SK-N-SH (cell line): ENCODE measurements at regions of chr4 and their contacts with region 1.

Region 1: GRCh38 chr4:186021461-186022167 is 47.3 kb upstream of the TLR3 start:
- DNase-seq: peak; percentile 82
- H3K4me3 ChIP-seq: peak overlapping the region; percentile 9 to 42; a peak in 2 of 4 replicates
- H3K27ac ChIP-seq: peak overlapping the region in 1 of 2 experiments; percentile 80; a peak in 2 of 4 replicates
- H3K4me1 ChIP-seq: peaks cover 0 to 17% of the 10 kb centered on the region in 2 experiments; a peak in 2 of 4 replicates
- H3K27me3 ChIP-seq: no peaks in the 10 kb centered on the region
- CTCF ChIP-seq: peak; percentile 92
- EP300 ChIP-seq: peak in 1 of 2 experiments; percentile 7; a peak in 1 of 4 replicates
- RAD21 ChIP-seq: peak; percentile 98

Region 2: DNA sequence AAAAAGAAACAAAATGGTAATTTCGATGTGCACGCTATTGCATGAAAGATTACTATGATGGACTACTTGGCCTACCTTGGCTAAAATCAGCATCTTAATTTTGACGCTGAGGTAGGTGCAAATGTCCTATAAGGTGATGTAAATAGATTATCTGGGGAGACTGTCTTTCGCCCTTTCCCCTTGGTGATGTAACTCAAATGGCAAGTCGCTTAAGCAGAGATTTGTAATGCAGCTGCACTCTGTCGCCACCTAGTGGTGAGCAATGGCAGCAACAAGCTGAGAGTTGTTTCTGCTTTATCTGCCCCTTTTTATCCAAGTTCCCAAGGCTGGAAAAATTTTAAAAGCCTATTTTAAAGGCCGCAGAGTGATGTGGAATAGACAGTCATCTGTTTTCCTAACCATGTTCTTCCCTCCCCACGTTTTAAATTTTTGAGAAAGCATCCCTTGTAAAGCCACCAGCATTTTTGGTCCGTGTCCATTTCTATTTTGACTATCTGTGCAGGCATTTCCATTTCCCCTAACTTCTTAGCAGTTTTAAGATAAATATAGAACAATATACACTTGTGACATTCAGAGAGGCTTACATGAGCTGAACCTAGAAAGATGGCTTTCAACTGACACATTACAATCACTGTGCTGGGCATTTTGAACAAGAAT is 424.0 kb before region 1 on chr4:
- CTCF ChIA-PET with region 1: interaction called, 29 read pairs
- POLR2A ChIA-PET with region 1: no interaction called
- DNase-seq: peak; percentile 73
- H3K4me3 ChIP-seq: peak overlapping the region in 1 of 2 experiments; percentile 43; a peak in 1 of 4 replicates
- H3K27ac ChIP-seq: no peak overlapping the region
- H3K4me1 ChIP-seq: no peaks in the 10 kb centered on the region
- H3K27me3 ChIP-seq: no peaks in the 10 kb centered on the region
- CTCF ChIP-seq: peak; percentile 99
- EP300 ChIP-seq: no peak
- RAD21 ChIP-seq: peak; percentile 97

Region 3: GRCh38 chr4:185634066-185634652 is 387.5 kb before region 1 on chr4:
- CTCF ChIA-PET with region 1: interaction called, 128 read pairs
- POLR2A ChIA-PET with region 1: no interaction called
- DNase-seq: peak; percentile 38
- H3K4me3 ChIP-seq: no peak overlapping the region; a peak in 1 of 4 replicates
- H3K27ac ChIP-seq: no peak overlapping the region
- H3K4me1 ChIP-seq: peaks cover 0 to 6% of the 10 kb centered on the region in 2 experiments; a peak in 2 of 4 replicates
- H3K27me3 ChIP-seq: no peaks in the 10 kb centered on the region
- CTCF ChIP-seq: peak; percentile 61
- EP300 ChIP-seq: no peak
- RAD21 ChIP-seq: no peak

Region 4: DNA sequence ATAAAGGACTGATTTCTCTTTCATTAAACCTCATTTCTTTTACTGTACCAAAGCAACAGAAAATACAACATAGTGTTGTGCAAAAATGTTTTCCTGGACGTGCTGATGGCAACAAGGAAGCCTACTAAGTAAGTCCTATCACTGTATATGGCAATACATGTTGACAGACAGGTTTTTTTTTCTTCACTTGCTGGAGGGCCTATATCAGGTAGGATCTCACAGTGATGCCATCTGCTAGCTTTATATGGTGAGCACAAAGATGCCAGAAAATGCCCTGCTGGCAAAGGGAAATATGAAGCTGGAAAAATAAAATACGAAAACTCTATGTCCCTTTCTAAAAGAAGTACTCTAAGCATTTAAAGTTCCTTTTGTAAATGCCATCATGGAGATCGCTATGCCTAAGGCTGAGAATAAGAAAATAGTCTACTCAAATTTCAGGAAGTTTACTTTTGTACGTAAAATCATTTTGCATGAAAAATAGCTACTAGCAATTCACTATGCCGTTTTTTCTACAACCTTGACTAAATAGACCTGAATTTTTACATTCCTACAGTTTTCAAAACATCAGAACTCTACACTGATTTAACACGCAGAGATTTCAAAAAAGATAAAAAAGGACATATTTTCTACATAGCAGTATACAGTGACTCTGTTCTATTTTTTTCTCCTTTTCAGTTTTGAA is 367.2 kb before region 1 on chr4:
- CTCF ChIA-PET with region 1: interaction called, 13 read pairs
- POLR2A ChIA-PET with region 1: no interaction called
- DNase-seq: no peak
- H3K4me3 ChIP-seq: no peak overlapping the region
- H3K27ac ChIP-seq: no peak overlapping the region
- H3K4me1 ChIP-seq: peaks cover 0 to 5% of the 10 kb centered on the region in 2 experiments; a peak in 2 of 4 replicates
- H3K27me3 ChIP-seq: no peaks in the 10 kb centered on the region
- CTCF ChIP-seq: no peak
- EP300 ChIP-seq: no peak
- RAD21 ChIP-seq: no peak

Region 5: DNA sequence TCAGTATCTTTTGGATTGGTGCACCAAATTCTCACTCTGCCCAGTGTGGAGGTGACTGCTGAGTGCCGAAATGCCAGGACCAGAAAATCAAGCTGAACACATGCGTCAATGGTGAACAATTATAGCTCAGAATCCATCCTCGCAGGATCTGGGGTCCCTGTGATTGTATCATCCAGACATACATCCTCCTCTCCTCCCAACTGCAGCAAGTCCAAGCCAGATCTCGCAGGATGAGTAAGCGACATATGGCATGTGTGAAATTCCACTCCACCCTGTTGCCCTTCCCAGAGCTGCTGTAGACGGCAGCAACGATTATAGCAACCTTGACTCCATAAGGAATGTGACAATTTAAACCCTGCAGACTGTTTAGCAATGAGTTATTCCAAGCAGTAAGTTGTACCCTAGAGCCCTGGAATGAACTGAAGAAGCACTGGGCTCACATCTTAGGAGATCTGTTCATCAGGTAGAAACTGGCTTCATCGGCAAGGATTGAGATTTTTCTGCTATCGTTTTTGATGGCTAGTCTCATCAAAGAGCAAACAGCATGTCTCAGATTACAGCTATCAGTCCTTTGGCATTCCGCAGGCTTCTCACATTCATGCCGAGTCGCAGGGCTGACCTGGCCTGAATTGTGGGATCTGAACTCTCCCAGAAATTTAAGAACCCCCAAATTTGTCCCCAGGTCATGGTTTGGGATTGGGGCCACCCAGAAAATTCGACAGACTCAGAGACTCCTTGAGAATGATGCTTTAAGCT is 174.1 kb before region 1 on chr4:
- CTCF ChIA-PET with region 1: no interaction called
- POLR2A ChIA-PET with region 1: no interaction called
- DNase-seq: peak; percentile 53
- H3K4me3 ChIP-seq: peak overlapping the region; percentile 20 to 24
- H3K27ac ChIP-seq: peak overlapping the region; percentile 79 to 96
- H3K4me1 ChIP-seq: peaks cover 0 to 17% of the 10 kb centered on the region in 2 experiments; a peak in 3 of 4 replicates
- H3K27me3 ChIP-seq: no peaks in the 10 kb centered on the region
- CTCF ChIP-seq: no peak
- EP300 ChIP-seq: no peak; a peak in 2 of 4 replicates
- RAD21 ChIP-seq: peak; percentile 16; the same call in 1 of the 2 replicates

Region 6: DNA sequence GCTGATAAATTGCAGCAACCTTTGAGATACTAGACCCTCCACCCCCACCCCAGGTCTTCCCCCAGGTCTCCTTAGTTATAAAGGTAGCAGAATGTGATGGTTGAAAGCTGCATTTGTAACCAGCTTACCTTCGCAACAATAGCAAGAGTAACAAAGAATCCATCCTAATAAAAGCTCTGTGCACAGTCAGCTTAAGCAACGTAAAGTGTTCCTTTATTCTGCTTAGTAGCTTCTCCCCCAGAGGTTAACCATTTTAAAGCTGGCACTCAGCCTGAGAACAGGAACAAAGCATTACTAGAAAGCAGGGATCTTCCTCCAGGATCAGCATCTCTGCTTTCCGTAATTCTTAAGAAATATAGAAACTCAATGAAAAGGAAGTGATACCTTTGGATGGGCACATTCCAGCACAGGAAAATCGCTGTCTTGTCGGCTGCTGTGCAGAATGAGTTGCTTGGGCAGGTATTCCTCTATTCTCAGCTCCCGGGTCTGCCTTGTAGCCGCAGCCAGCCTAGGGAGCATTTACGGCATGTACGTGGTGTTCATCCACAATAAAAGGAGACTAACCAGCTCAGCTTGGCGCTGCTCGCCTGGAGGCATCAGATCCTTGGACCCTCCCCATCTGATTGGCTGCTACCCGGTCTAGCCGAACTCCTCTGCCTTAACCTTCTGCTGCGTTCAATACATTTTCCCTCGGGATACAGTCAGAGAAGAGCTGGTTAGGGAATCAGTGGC is 65.6 kb before region 1 on chr4:
- CTCF ChIA-PET with region 1: interaction called, 12 read pairs
- POLR2A ChIA-PET with region 1: interaction called, 3 read pairs
- DNase-seq: peak; percentile 50
- H3K4me3 ChIP-seq: peak overlapping the region in 1 of 2 experiments; percentile 38; a peak in 2 of 4 replicates
- H3K27ac ChIP-seq: peak overlapping the region in 1 of 2 experiments; percentile 72; a peak in 2 of 4 replicates
- H3K4me1 ChIP-seq: peaks cover 0 to 23% of the 10 kb centered on the region in 2 experiments; a peak in 2 of 4 replicates
- H3K27me3 ChIP-seq: peaks cover 14% of the 10 kb centered on the region
- CTCF ChIP-seq: no peak
- EP300 ChIP-seq: no peak
- RAD21 ChIP-seq: no peak

Region 7: GRCh38 chr4:186037692-186038658 is 16.4 kb after region 1 on chr4:
- CTCF ChIA-PET with region 1: interaction called, 105 read pairs
- POLR2A ChIA-PET with region 1: interaction called, 4 read pairs
- DNase-seq: peak; percentile 61
- H3K4me3 ChIP-seq: no peak overlapping the region
- H3K27ac ChIP-seq: no peak overlapping the region
- H3K4me1 ChIP-seq: peaks cover 0 to 5% of the 10 kb centered on the region in 2 experiments; a peak in 1 of 4 replicates
- H3K27me3 ChIP-seq: no peaks in the 10 kb centered on the region
- CTCF ChIP-seq: peak; percentile 80
- EP300 ChIP-seq: no peak
- RAD21 ChIP-seq: peak; percentile 91

Region 8: GRCh38 chr4:186078980-186079695 is 57.5 kb after region 1 on chr4:
- CTCF ChIA-PET with region 1: no interaction called
- POLR2A ChIA-PET with region 1: no interaction called
- DNase-seq: no peak
- H3K4me3 ChIP-seq: no peak overlapping the region
- H3K27ac ChIP-seq: no peak overlapping the region
- H3K4me1 ChIP-seq: peaks cover 0 to 3% of the 10 kb centered on the region in 2 experiments; a peak in 1 of 4 replicates
- H3K27me3 ChIP-seq: no peaks in the 10 kb centered on the region
- CTCF ChIP-seq: no peak
- EP300 ChIP-seq: no peak
- RAD21 ChIP-seq: no peak

Region 9: GRCh38 chr4:186514271-186514950 is 492.8 kb after region 1 on chr4:
- CTCF ChIA-PET with region 1: no interaction called
- POLR2A ChIA-PET with region 1: no interaction called
- DNase-seq: no peak
- H3K4me3 ChIP-seq: no peak overlapping the region
- H3K27ac ChIP-seq: no peak overlapping the region
- H3K4me1 ChIP-seq: no peaks in the 10 kb centered on the region
- H3K27me3 ChIP-seq: no peaks in the 10 kb centered on the region
- CTCF ChIP-seq: no peak
- EP300 ChIP-seq: no peak
- RAD21 ChIP-seq: no peak